ENCODE measurements at regions of chr2 and their contacts with region 1.

Region 1: DNA sequence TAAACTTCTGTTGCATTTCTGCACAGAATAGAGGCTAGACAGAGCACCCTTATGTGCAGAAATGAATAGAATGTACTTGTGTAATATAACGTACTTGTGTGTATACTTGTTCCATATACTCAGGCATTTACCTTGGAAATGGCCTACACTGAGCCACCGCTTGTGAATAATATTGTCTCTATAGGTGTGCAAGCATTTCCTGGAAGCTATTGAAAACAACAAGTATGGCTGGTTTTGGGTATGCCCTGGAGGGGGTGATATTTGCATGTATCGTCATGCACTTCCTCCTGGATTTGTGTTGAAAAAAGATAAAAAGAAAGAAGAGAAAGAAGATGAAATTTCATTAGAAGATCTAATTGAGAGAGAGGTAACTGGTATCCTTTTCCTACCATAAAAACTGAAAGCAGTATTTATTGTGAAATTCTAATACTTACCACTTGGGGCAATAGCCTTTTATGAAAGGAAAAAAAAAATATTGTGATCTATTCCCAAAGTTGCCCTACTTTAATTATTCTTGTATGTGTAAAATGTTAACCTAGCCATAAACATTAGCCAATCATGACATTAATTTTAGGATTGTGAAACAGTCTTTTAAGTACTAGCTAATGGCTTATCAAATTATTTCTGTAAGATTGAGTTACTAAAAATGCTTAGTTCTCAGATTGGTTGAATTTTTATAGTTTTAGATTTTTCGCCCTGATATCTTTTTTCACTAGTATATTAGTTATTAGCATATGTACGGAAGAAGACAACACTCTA is 18.0 kb downstream of the ZC3H15 start:
- DNase-seq: no peak
- H3K4me3 ChIP-seq: no peak overlapping the region
- H3K27ac ChIP-seq: no peak overlapping the region
- H3K4me1 ChIP-seq: peaks cover 0 to 5% of the 10 kb centered on the region in 2 donors
- H3K27me3 ChIP-seq: no peaks in the 10 kb centered on the region
- CTCF ChIP-seq: peak; percentile 47 to 83 (median 61)
- POLR2A ChIP-seq: no peak

Region 2: GRCh38 chr2:186467421-186467820 is 36.6 kb before region 1 on chr2:
- intact Hi-C with region 1: no loop called
- DNase-seq: no peak
- H3K4me3 ChIP-seq: no peak overlapping the region
- H3K27ac ChIP-seq: no peak overlapping the region
- H3K4me1 ChIP-seq: peaks cover 3 to 9% of the 10 kb centered on the region in 2 donors
- H3K27me3 ChIP-seq: no peaks in the 10 kb centered on the region
- CTCF ChIP-seq: no peak
- POLR2A ChIP-seq: no peak

Region 3: GRCh38 chr2:186641807-186642321 is 137.8 kb after region 1 on chr2:
- intact Hi-C with region 1: loop called (anchors 5 kb)
- DNase-seq: peak; percentile 55 to 74 (median 59)
- H3K4me3 ChIP-seq: no peak overlapping the region
- H3K27ac ChIP-seq: peak overlapping the region in 1 of 5 donors; percentile 2
- H3K4me1 ChIP-seq: peaks cover 0 to 20% of the 10 kb centered on the region in 2 donors
- H3K27me3 ChIP-seq: no peaks in the 10 kb centered on the region
- CTCF ChIP-seq: peak; percentile 51 to 87 (median 82)
- POLR2A ChIP-seq: no peak

Region 4: GRCh38 chr2:186771850-186772611 is 268.0 kb after region 1 on chr2:
- intact Hi-C with region 1: no loop called
- DNase-seq: no peak
- H3K4me3 ChIP-seq: no peak overlapping the region
- H3K27ac ChIP-seq: no peak overlapping the region
- H3K4me1 ChIP-seq: no peaks in the 10 kb centered on the region
- H3K27me3 ChIP-seq: no peaks in the 10 kb centered on the region
- CTCF ChIP-seq: no peak
- POLR2A ChIP-seq: no peak